Mammary epithelial cell (primary cell): ENCODE measurements at regions of chr17 and their contacts with region 1.

Region 1: GRCh38 chr17:27332485-27333409 is 38.8 kb downstream of the WSB1 start:
- DNase-seq: peak; percentile 98
- H3K4me3 ChIP-seq: peak overlapping the region; percentile 51 to 62 (median 57)
- H3K27ac ChIP-seq: peak overlapping the region; percentile 89
- H3K4me1 ChIP-seq: peaks cover 30% of the 10 kb centered on the region
- H3K27me3 ChIP-seq: no peaks in the 10 kb centered on the region
- CTCF ChIP-seq: peak; percentile 65 to 91

Region 2: DNA sequence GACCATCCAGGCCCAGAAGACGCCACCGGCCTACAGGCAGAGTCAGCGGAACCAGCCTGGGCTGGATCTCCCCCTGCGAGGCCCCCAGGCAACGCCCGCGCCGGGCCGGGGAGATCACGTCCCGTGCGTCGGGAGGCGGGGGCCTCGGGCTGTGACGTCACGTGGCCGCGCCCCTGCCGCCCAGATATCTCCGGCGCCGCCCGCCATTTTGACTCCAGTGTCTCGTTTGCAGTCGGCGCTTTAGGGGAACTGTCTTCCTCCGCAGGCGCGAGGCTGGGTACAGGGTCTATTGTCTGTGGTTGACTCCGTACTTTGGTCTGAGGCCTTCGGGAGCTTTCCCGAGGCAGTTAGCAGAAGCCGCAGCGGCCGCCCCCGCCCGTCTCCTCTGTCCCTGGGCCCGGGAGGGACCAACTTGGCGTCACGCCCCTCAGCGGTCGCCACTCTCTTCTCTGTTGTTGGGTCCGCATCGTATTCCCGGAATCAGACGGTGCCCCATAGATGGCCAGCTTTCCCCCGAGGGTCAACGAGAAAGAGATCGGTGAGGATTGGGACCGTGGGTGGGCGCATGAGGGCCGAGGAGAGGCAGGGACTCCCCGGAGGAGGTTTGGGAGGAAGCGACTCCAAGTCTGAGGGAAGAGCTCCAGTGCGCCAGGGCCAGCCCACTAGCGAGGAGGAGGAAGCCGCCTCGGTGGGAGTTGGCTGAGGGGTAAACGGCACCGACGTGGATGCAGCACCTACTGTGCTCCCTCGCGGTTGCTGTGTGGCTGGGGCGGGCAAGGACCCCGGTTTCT is 38.7 kb before region 1 on chr17 and contains the start of gene WSB1:
- CTCF ChIA-PET with region 1: no interaction called
- dilution Hi-C with region 1: no loop called
- in situ Hi-C with region 1: no loop called
- intact Hi-C with region 1: loop called (anchors 1 kb)
- DNase-seq: peak; percentile 84
- H3K4me3 ChIP-seq: peak within 1 kb of the TSS; percentile 75 to 97 (median 94)
- H3K27ac ChIP-seq: peak within 1 kb of the TSS; percentile 93
- H3K4me1 ChIP-seq: peaks cover 16% of the 10 kb centered on the region
- H3K27me3 ChIP-seq: no peaks in the 10 kb centered on the region
- CTCF ChIP-seq: peak in 1 of 2 donors; percentile 3
- total RNA-seq, gene WSB1: 93.0 to 119 TPM